Adrenal gland (tissue), 19 donors: ENCODE measurements at regions of chr7 and their contacts with region 1.

Region 1: DNA sequence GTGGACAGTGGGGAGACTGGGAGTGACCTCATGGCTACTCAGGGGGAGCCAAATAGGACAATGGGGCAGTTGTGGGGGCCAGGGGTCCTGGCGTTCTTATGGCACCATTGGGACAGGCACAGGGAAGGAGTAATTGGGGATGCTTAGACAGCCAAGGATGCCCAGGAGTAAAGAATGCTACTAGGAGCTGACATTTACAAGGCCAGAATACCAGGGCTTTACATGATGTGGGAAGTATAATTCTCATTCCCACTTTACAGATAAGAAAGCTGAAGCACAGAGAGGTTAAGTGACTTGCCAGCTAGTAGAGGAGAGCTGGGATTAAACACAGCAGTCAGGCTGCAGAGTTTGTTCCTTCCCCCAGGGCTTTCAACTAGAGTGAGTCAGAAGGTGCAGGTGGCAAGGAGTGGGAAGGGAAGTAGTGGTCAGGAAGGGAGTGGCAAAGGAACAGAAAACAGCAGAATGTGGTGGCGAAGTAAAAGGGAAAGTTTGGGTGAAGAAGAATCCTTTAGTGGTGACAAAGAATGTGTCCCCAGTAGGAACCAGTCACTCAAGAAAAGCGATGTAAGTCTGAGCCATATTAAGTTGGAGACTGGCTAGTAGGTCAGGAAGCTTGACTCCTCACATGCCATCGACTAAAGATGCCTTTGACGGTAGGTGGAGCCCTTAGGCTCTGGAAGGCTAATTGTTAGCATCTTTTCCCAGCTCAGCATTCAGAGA is 32.8 kb downstream of the CPVL start:
- DNase-seq: no peak
- H3K4me3 ChIP-seq: no peak overlapping the region
- H3K27ac ChIP-seq: no peak overlapping the region
- H3K4me1 ChIP-seq: peaks cover 0 to 21% of the 10 kb centered on the region in 2 donors
- H3K27me3 ChIP-seq: no peaks in the 10 kb centered on the region
- CTCF ChIP-seq: peak in 2 of 6 experiments; percentile 9 to 16
- POLR2A ChIP-seq: no peak

Region 2: DNA sequence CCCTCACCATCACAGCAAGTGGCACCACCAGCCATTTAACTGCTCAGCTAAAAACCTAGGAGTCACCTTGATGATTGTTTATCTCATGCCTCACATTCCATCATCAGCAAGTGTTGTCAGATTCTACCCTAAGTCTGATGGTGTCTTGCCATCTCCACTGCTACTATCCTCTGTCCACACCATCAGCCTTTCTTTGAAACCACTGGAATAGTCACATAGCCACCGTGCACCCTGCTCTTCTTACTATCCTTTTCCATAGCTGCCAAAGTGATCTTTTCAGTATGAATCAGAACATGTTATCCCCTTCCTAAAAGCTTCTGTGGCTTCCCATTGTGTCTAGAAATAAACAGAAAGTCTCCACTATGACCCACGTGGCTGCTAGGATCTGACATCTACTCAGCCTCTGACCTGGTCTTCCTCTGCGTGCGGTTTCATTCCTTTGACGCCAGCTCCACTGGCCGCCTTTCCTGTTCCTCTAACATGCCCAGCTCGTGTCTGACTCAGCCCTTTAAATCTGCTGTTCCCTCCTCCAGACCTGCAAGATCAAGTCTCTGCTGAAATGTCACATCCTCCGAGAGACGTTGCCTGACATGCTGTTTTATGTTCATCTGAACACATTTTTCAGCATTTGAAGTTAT is 64.5 kb after region 1 on chr7:
- intact Hi-C with region 1: loop called in 1 of 2 experiments (anchors 10 kb)
- DNase-seq: peak; percentile 48 to 84 (median 69)
- H3K4me3 ChIP-seq: no peak overlapping the region
- H3K27ac ChIP-seq: peak overlapping the region in 2 of 5 donors; percentile 49 to 75
- H3K4me1 ChIP-seq: no peaks in the 10 kb centered on the region
- H3K27me3 ChIP-seq: no peaks in the 10 kb centered on the region
- CTCF ChIP-seq: no peak
- POLR2A ChIP-seq: no peak

Region 3: DNA sequence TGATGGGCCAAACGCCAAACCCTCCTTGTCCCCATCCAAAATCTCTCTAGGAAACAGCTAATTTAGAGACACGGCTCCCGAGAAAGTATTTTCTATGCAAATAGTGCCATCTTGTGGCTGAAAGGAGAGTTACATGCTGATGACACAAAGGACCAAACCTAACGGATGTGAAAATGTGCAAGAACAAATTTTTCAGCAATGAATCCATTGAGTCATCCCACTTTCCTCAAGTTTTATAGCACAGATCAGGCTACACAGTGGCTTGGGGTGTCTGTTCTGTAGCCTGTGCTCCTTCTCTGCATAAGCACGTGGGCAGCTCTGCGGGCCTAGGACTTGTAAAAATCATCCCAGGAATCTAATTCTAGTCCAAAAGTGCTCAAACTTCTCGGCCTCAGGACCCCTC is 295.3 kb after region 1 on chr7:
- intact Hi-C with region 1: loop called in 1 of 2 experiments (anchors 5 kb)
- DNase-seq: peak; percentile 40 to 81 (median 70)
- H3K4me3 ChIP-seq: no peak overlapping the region
- H3K27ac ChIP-seq: no peak overlapping the region
- H3K4me1 ChIP-seq: no peaks in the 10 kb centered on the region
- H3K27me3 ChIP-seq: no peaks in the 10 kb centered on the region
- CTCF ChIP-seq: peak; percentile 81 to 94 (median 89)
- POLR2A ChIP-seq: no peak